ENCODE measurements at regions of chr9 and their contacts with region 1.

Region 1: GRCh38 chr9:93945400-93946337 is 9.5 kb downstream of the BARX1 start:
- DNase-seq: no peak
- H3K4me3 Mint-ChIP-seq: no peak overlapping the region
- H3K27ac Mint-ChIP-seq: no peak overlapping the region
- H3K4me1 Mint-ChIP-seq: peaks cover 14% of the 10 kb centered on the region
- H3K27me3 Mint-ChIP-seq: peaks cover 87% of the 10 kb centered on the region

Region 2: GRCh38 chr9:92808726-92809451 is 1136.8 kb before region 1 on chr9:
- intact Hi-C with region 1: loop called (anchors 10 kb)
- DNase-seq: peak; percentile 43
- H3K4me3 Mint-ChIP-seq: peak overlapping the region; percentile 76
- H3K27ac Mint-ChIP-seq: no peak overlapping the region
- H3K4me1 Mint-ChIP-seq: peaks cover 6% of the 10 kb centered on the region
- H3K27me3 Mint-ChIP-seq: peaks cover 56% of the 10 kb centered on the region

Region 3: GRCh38 chr9:93908591-93909511 is 36.8 kb before region 1 on chr9:
- intact Hi-C with region 1: no loop called
- DNase-seq: no peak
- H3K4me3 Mint-ChIP-seq: no peak overlapping the region
- H3K27ac Mint-ChIP-seq: no peak overlapping the region
- H3K4me1 Mint-ChIP-seq: peaks cover 2% of the 10 kb centered on the region
- H3K27me3 Mint-ChIP-seq: peaks cover 3% of the 10 kb centered on the region

Region 4: DNA sequence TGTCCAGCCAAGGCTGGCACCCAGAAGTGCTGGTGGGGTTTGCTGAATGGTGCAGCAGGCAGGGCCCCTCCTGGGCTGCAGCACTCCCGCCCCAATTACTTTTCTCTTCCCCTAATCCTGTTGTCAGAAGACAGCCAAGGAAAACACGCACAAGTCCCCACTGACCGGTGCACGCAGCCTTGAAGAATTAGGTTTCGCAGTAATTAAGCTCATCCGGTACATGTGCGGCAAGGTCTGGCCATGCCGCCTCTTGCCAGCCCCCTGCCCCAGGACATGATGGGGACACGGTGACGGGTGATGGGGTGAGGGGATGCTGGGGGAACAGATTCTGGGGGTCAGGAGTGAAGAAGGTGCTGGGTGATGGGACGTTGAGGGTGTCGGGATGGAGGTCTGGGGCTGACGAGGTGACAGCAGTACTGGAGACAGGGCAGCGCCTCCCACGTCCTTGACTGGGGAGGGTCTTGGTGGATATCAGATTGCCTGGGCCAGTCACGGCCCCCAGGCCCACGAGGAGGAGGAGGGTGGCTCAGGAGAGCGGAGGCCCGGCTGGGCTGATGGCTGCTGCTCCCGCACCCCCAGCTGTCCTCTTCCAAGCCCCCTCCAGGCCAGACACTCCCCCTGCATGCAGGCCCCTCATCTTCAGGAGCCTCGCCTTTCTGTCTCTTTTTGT is 25.4 kb before region 1 on chr9:
- intact Hi-C with region 1: no loop called
- DNase-seq: no peak
- H3K4me3 Mint-ChIP-seq: no peak overlapping the region
- H3K27ac Mint-ChIP-seq: no peak overlapping the region
- H3K4me1 Mint-ChIP-seq: no peaks in the 10 kb centered on the region
- H3K27me3 Mint-ChIP-seq: no peaks in the 10 kb centered on the region

Region 5: GRCh38 chr9:94014065-94014654 is 68.5 kb after region 1 on chr9:
- intact Hi-C with region 1: no loop called
- DNase-seq: no peak
- H3K4me3 Mint-ChIP-seq: no peak overlapping the region
- H3K27ac Mint-ChIP-seq: no peak overlapping the region
- H3K4me1 Mint-ChIP-seq: no peaks in the 10 kb centered on the region
- H3K27me3 Mint-ChIP-seq: peaks cover 6% of the 10 kb centered on the region

Measured in activated T-helper 2 cell treated with anti-CD3 and anti-CD28 coated beads, Interferon-gamma antibody, Interleukin-2, Interleukin-4, amounts not matched to agents 10 μg/mL and 5 μg/mL and 100 μg/mL, durations not matched to agents 14 hours and 24 hours and 36 hours (primary cell).